ENCODE measurements at regions of chr12 and their contacts with region 1.

Region 1: DNA sequence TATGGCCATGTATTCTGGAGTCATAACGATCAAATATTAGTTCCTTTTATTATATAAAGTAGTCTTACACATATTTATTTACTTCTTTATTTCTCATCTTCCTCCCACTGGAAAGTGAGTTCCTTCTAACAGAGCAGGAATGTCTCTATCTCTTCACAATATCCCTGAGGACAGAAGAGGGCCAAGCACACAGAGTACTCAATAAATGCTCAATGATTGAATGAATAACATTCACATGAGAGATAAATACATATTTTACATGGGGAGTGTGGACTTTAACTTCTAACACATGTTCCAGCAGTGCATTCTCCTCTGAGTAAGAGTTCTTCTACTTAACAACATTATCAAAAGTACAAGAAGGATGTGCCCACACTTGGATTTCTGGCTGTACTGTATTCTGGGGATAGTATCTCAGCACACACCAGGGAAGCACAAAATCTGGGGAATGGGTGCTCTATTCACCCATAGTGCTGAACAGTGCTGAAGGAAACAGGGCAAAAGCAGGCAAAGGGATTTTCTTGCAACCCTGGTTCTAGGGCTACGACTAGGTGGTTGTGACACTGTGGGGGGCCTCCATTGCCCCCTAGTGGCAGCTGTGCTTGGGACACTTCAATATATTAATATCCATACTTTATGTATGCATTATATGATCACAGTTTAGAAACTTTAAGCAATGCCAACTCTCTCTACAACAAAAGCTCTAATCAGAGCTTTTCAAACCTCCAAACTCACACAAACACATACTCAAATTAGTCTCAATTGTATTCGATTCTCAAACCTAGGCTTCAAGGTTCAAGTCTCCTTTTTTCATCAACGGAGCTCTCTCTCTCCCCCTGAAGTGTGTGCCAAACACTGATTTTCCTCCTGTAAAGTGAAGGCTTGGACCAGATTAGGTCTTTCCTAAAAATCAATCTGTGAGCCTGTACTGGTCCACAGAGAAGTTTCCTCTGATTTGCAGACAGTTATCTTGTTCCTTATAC is 115.5 kb downstream of the SLC2A13 start:
- DNase-seq: peak; percentile 62
- ATAC-seq: peak; percentile 73
- H3K4me3 ChIP-seq: no peak overlapping the region
- H3K4me3 Mint-ChIP-seq: no peak overlapping the region
- H3K27ac ChIP-seq: no peak overlapping the region
- H3K27ac Mint-ChIP-seq: no peak overlapping the region
- H3K4me1 ChIP-seq: no peaks in the 10 kb centered on the region
- H3K4me1 Mint-ChIP-seq: peaks cover 8% of the 10 kb centered on the region
- H3K27me3 ChIP-seq: no peaks in the 10 kb centered on the region
- H3K27me3 Mint-ChIP-seq: no peaks in the 10 kb centered on the region
- CTCF ChIP-seq: peak; percentile 95

Region 2: DNA sequence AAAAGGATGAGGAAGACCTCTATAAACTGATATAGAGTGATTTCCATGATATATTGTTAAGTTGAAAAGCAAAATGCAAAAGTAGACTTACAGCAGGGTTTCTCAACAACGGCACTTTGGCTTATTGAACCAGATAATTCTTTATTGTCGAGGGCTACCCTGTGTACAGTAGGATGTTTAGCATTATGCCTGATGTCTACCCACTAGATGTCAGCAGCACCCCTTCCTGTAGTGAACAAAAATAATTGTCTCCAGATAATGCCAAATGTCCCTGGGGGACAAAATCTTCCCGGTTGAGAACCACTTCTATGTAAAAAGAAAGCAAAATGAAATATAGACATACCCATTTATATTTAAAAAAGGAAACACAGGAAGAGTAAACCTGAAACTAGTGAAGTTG is 403.2 kb before region 1 on chr12:
- CTCF ChIA-PET with region 1: interaction called, 48 read pairs
- POLR2A ChIA-PET with region 1: no interaction called
- intact Hi-C with region 1: no loop called
- DNase-seq: peak; percentile 41
- ATAC-seq: no peak
- H3K4me3 ChIP-seq: no peak overlapping the region
- H3K4me3 Mint-ChIP-seq: no peak overlapping the region
- H3K27ac ChIP-seq: no peak overlapping the region
- H3K27ac Mint-ChIP-seq: no peak overlapping the region
- H3K4me1 ChIP-seq: no peaks in the 10 kb centered on the region
- H3K4me1 Mint-ChIP-seq: peaks cover 2% of the 10 kb centered on the region
- H3K27me3 ChIP-seq: no peaks in the 10 kb centered on the region
- H3K27me3 Mint-ChIP-seq: no peaks in the 10 kb centered on the region
- CTCF ChIP-seq: peak; percentile 58

Region 3: GRCh38 chr12:39764944-39765560 is 225.4 kb before region 1 on chr12:
- CTCF ChIA-PET with region 1: interaction called, 11 read pairs
- POLR2A ChIA-PET with region 1: no interaction called
- intact Hi-C with region 1: loop called (anchors 2 kb)
- DNase-seq: peak; percentile 32
- ATAC-seq: peak; percentile 45
- H3K4me3 ChIP-seq: no peak overlapping the region
- H3K4me3 Mint-ChIP-seq: no peak overlapping the region
- H3K27ac ChIP-seq: no peak overlapping the region
- H3K27ac Mint-ChIP-seq: no peak overlapping the region
- H3K4me1 ChIP-seq: no peaks in the 10 kb centered on the region
- H3K4me1 Mint-ChIP-seq: no peaks in the 10 kb centered on the region
- H3K27me3 ChIP-seq: no peaks in the 10 kb centered on the region
- H3K27me3 Mint-ChIP-seq: no peaks in the 10 kb centered on the region
- CTCF ChIP-seq: peak; percentile 80

Measured in B cell (primary cell).